B cell (primary cell): ENCODE measurements at regions of chr10 and their contacts with region 1.

Region 1: DNA sequence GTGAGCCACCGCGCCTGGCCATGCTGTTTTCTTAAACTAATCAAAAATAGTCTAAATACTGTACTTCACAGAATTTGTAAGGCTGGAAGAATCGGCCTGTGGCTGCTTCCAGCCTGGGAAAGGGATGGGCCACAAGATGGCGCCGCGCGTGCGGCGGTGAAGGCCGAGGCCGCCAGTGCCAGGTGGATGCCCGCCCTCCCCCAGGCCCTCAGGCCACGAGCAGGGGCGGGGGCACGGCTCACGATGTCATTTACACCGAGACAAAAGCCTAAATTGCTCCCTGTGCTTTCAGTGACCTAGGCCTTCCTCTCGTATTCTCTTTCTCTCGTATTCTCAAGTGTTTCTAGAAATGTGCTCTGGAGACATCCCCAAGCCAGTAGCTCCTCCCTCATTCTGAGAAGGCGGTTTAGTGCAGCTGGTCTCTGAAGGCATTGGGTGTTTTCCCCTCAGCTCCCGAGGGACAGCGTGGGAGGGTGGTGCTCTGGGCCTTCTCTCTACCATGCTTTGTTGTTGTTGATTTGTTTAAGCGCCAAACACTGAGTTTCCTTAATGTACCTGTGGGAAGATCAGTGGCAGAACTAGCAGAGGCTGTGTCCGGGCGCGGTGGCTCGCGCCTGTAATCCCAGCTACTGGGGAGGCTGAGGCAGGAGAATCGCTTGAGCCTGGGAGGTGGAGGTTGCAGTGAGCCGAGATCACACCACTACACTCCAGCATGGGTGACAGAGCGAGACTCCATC is 68.4 kb downstream of the CDC123 start:
- DNase-seq: peak; percentile 99
- ATAC-seq: peak; percentile 89
- H3K4me3 ChIP-seq: peak overlapping the region in 4 of 5 experiments; percentile 18 to 34 (median 22)
- H3K4me3 Mint-ChIP-seq: peak overlapping the region; percentile 79
- H3K27ac ChIP-seq: peak overlapping the region; percentile 86 to 100
- H3K27ac Mint-ChIP-seq: peak overlapping the region; percentile 99
- H3K4me1 ChIP-seq: peaks cover 51 to 62% of the 10 kb centered on the region in 2 donors
- H3K4me1 Mint-ChIP-seq: peaks cover 50% of the 10 kb centered on the region
- H3K27me3 ChIP-seq: no peaks in the 10 kb centered on the region
- H3K27me3 Mint-ChIP-seq: no peaks in the 10 kb centered on the region
- CTCF ChIP-seq: peak; percentile 56

Region 2: DNA sequence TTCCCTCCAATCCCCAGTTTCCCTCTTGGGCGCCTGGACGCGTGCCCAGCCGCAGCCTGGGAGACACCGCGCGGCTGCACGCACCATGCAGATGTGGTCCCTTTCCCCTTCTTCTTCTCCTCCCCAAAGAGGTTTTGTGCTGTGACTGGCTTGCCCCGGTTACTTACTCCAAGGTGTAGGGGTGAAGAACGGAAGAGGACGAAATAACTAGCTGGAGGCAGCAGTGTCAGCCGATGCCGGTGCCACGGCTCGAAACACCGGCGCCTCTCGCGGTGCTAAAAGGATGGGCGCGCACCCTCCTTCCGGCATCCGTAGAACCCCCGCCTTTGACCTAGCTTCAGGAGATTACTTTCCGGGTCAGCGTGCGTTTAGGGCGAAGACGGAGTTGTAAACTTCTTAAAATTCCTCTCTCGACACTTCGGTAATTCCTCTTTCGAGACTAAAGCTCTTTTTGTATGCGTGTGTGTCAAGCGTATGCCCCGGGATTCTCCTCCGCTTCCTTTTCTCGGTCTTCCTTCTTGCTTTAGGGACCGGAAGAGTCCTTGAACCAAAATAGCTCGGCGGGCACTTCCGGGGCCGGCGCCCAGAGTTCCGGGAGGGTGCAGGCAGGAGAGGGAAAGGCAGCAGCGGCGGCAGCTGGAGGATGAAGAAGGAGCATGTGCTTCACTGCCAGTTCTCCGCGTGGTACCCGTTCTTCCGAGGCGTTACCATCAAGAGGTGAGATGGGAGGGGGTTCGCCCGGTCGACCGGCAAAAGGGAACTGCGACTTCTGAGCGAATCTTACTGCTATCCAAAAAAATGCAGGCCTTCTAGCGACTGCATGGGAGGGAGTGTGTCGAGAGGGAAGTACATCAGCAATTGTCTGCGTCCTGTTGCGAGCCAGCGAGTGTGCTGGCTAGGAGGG is 68.5 kb before region 1 on chr10 and contains the starts of genes CDC123 and NUDT5:
- CTCF ChIA-PET with region 1: no interaction called
- POLR2A ChIA-PET with region 1: interaction called, 6 read pairs
- intact Hi-C with region 1: loop called (anchors 2 kb)
- DNase-seq: peak; percentile 93
- ATAC-seq: peak; percentile 90
- H3K4me3 ChIP-seq: peak within 1 kb of the TSS; percentile 87 to 97 (median 95)
- H3K4me3 Mint-ChIP-seq: peak within 1 kb of the TSS; percentile 93
- H3K27ac ChIP-seq: peak within 1 kb of the TSS; percentile 91 to 94
- H3K27ac Mint-ChIP-seq: peak within 1 kb of the TSS; percentile 99
- H3K4me1 ChIP-seq: peaks cover 18 to 24% of the 10 kb centered on the region in 2 donors
- H3K4me1 Mint-ChIP-seq: peaks cover 42% of the 10 kb centered on the region
- H3K27me3 ChIP-seq: no peaks in the 10 kb centered on the region
- H3K27me3 Mint-ChIP-seq: no peaks in the 10 kb centered on the region
- CTCF ChIP-seq: no peak
- total RNA-seq, gene CDC123: 56.0 and 62.0 TPM in 2 replicates
- total RNA-seq, gene NUDT5: 39.1 and 39.9 TPM in 2 replicates

Region 3: GRCh38 chr10:12252882-12253546 is 11.4 kb before region 1 on chr10:
- CTCF ChIA-PET with region 1: interaction called, 43 read pairs
- POLR2A ChIA-PET with region 1: interaction called, 3 read pairs
- intact Hi-C with region 1: loop called (anchors 1 kb)
- DNase-seq: peak; percentile 86
- ATAC-seq: peak; percentile 99
- H3K4me3 ChIP-seq: peak overlapping the region in 2 of 5 experiments; percentile 23 to 53
- H3K4me3 Mint-ChIP-seq: peak overlapping the region; percentile 83
- H3K27ac ChIP-seq: peak overlapping the region; percentile 57
- H3K27ac Mint-ChIP-seq: peak overlapping the region; percentile 93
- H3K4me1 ChIP-seq: peaks cover 14% of the 10 kb centered on the region in 2 donors
- H3K4me1 Mint-ChIP-seq: peaks cover 17% of the 10 kb centered on the region
- H3K27me3 ChIP-seq: no peaks in the 10 kb centered on the region
- H3K27me3 Mint-ChIP-seq: no peaks in the 10 kb centered on the region
- CTCF ChIP-seq: peak; percentile 82

Region 4: DNA sequence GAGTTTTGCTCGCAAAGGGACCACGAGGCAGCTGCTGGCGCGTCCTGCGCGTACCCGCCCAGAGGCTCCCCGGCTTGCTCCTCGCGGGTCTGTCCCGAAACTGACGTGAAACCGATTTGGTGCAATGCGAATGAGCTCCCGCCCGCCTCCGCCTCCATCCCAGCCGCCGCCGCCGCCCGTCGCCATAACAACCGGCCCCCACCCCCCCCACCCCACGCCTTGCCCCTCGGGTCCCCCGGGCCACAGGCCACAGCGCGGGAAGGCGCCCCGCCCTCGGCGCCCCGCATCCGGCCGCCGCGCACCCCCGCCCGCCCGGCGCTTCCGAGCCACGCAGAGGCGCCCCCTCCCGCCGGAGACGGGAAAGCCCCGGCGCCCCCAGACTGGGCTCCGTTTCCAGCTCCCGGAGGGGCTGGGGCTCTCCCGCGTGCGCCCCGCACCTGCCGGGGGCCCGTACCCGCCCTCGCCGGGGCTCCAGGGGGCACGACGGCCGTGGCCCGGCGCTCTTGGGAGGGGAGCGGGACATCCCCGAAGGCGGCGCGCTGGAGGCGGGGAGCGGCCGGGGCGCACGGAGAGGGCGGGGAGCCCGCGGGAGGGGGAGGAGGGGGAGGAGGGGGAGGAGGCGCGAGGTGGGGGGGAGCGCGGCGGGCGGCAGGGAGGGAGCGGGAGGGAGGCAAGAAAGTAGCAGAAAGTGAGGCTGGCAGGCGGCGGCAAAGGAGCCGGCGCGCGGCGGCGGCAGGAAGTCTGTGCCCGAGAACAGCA is 84.7 kb after region 1 on chr10 and contains the start of gene CAMK1D:
- CTCF ChIA-PET with region 1: interaction called, 42 read pairs
- POLR2A ChIA-PET with region 1: interaction called, 39 read pairs
- intact Hi-C with region 1: loop called (anchors 1 kb)
- DNase-seq: peak; percentile 96
- ATAC-seq: peak; percentile 63
- H3K4me3 ChIP-seq: peak within 1 kb of the TSS; percentile 74 to 93 (median 76)
- H3K4me3 Mint-ChIP-seq: peak within 1 kb of the TSS; percentile 99
- H3K27ac ChIP-seq: peak within 1 kb of the TSS; percentile 73 to 94
- H3K27ac Mint-ChIP-seq: peak within 1 kb of the TSS; percentile 99
- H3K4me1 ChIP-seq: peaks cover 35 to 43% of the 10 kb centered on the region in 2 donors
- H3K4me1 Mint-ChIP-seq: peaks cover 59% of the 10 kb centered on the region
- H3K27me3 ChIP-seq: no peaks in the 10 kb centered on the region
- H3K27me3 Mint-ChIP-seq: no peaks in the 10 kb centered on the region
- CTCF ChIP-seq: peak; percentile 2
- total RNA-seq, gene CAMK1D: 69.7 and 77.3 TPM in 2 replicates

Region 5: GRCh38 chr10:12710594-12711349 is 446.4 kb after region 1 on chr10:
- CTCF ChIA-PET with region 1: interaction called, 23 read pairs
- POLR2A ChIA-PET with region 1: no interaction called
- intact Hi-C with region 1: no loop called
- DNase-seq: peak; percentile 81
- ATAC-seq: peak; percentile 88
- H3K4me3 ChIP-seq: no peak overlapping the region
- H3K4me3 Mint-ChIP-seq: no peak overlapping the region
- H3K27ac ChIP-seq: peak overlapping the region in 1 of 2 donors; percentile 54
- H3K27ac Mint-ChIP-seq: peak overlapping the region; percentile 59
- H3K4me1 ChIP-seq: peaks cover 0 to 3% of the 10 kb centered on the region in 2 donors
- H3K4me1 Mint-ChIP-seq: peaks cover 16% of the 10 kb centered on the region
- H3K27me3 ChIP-seq: no peaks in the 10 kb centered on the region
- H3K27me3 Mint-ChIP-seq: no peaks in the 10 kb centered on the region
- CTCF ChIP-seq: peak; percentile 98

Region 6: DNA sequence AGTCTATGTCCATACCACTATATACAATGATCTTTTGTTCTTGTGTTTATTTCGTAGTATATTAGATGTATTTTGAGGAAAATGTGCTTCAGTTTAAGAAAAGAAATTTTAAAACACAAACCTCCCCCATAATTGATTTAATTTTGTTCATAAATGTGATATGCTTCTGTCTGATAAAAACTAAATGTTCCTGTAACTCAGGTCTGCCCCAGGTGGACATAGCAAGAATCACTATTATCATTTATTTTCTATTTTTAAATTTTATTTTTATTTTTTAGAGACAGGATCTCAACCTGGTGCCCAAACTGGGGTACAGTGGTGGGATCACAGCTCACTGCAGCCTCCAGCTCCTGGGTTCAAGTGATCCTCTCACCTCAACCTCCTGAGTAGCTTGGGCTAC is 1221.3 kb after region 1 on chr10:
- CTCF ChIA-PET with region 1: no interaction called
- POLR2A ChIA-PET with region 1: no interaction called
- intact Hi-C with region 1: no loop called
- DNase-seq: no peak
- ATAC-seq: no peak
- H3K4me3 ChIP-seq: no peak overlapping the region
- H3K4me3 Mint-ChIP-seq: no peak overlapping the region
- H3K27ac ChIP-seq: no peak overlapping the region
- H3K27ac Mint-ChIP-seq: no peak overlapping the region
- H3K4me1 ChIP-seq: peaks cover 14 to 22% of the 10 kb centered on the region in 2 donors
- H3K4me1 Mint-ChIP-seq: peaks cover 26% of the 10 kb centered on the region
- H3K27me3 ChIP-seq: no peaks in the 10 kb centered on the region
- H3K27me3 Mint-ChIP-seq: peaks cover 4% of the 10 kb centered on the region
- CTCF ChIP-seq: peak; percentile 44